Astrocyte of the cerebellum (primary cell): ENCODE measurements at regions of chr4 and their contacts with region 1.

Region 1: GRCh38 chr4:123200051-123200940 is 196.3 kb upstream of the SPRY1 start:
- DNase-seq: no peak
- H3K4me3 ChIP-seq: no peak overlapping the region
- CTCF ChIP-seq: no peak

Region 2: DNA sequence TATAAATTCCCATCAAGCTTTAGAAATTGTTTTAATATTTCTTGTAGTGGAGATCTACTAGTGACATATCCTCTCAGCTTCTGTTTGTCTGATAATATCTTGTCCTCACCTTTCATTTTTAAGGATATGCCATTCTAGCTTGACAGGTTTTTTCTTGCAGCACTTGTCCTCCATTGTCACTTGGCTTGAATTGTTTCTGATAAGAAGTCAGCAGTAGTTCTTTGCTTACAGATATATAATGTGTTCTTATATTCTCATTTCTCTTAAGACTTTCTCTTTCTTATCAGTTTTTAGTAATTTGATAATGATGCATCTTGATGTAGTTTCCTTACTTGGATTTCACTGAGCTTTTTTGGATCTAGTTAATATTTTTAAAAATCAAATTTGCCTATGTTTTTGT is 157.3 kb before region 1 on chr4:
- in situ Hi-C with region 1: no loop called
- DNase-seq: no peak
- H3K4me3 ChIP-seq: no peak overlapping the region
- CTCF ChIP-seq: no peak

Region 3: DNA sequence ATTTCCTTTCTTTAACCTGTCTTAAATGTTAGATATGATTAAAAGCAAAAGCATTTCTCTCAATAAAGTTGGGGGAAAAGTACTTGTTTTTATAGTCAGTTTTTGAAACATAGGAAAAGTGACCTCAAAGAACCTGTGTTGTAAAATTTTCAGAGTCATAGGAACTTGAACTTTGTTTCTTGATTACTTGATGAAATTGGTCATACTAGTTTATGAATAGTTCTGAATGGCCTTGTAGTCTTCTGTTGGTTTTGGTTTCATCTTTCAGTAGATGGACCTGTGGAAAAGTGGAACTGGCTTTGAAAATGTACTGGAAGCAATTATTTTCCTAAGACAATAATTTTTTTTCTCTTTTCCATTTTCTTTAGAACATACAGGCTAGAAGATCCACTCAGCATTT is 55.7 kb before region 1 on chr4:
- in situ Hi-C with region 1: no loop called
- DNase-seq: no peak
- H3K4me3 ChIP-seq: no peak overlapping the region
- CTCF ChIP-seq: no peak

Region 4: DNA sequence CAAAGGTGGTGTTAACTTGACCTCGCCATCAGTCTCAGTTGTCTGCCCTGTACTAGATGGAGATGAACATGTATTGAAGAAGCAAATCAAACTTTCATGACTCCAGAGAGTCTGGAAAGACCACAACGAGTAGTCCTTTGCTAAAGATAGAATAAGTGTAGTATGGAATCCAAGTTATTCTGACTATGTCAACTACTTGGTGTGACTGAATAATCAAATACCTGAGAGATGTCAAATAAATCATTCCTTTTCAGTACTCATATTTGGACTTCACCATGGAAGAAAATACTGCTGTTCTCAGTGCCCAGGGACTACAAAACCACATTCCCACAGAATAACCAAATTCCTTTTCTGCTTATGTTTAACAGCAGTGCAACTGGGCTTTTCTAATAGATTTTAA is 35.1 kb after region 1 on chr4:
- in situ Hi-C with region 1: loop called (anchors 5 kb)
- DNase-seq: peak; percentile 40
- H3K4me3 ChIP-seq: no peak overlapping the region
- CTCF ChIP-seq: no peak